Dendritic cell treated with granulocyte-macrophage colony-stimulating factor and Interleukin-4, amounts not matched to agents 40 ng/mL and 50 ng/mL, for 4 days (primary cell): ENCODE measurements at regions of chr12 and their contacts with region 1.

Region 1: DNA sequence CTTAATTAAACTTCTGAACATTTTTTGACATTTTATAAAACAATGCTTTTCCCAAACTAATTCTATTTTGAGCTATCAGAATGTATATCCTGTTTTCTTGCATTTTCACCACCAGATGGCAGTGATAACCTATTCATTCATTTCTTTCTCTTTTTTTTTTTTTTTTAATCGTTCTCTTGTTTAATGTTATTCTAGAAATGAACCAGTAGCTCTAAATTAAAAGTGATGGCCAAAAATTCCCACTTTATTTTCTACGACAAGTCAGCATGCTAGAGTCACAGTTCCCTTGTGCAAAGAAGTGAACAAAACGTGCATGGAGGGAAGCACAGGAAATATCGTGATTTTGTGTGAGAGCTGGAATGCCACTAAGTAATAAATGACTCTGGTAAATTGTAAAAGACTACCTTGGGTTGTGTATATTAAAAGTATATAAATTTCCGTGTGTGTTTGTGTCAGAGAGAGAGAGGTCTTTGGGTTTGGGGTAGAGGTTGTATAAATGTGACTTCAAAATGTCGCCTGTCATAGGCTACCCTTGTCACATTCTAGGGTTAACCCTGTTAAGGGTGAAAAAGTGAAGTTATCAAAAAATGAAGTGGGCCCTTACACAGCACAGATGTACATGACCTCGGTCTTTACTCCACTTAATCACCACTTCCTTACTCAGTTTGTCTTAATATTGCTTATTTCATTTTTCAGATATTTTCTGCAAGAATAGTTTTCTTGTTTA is 40.4 kb upstream of the LDHB start:
- H3K4me3 Mint-ChIP-seq: no peak overlapping the region
- H3K27ac Mint-ChIP-seq: no peak overlapping the region
- H3K4me1 Mint-ChIP-seq: peaks cover 6% of the 10 kb centered on the region
- H3K27me3 Mint-ChIP-seq: no peaks in the 10 kb centered on the region

Region 2: DNA sequence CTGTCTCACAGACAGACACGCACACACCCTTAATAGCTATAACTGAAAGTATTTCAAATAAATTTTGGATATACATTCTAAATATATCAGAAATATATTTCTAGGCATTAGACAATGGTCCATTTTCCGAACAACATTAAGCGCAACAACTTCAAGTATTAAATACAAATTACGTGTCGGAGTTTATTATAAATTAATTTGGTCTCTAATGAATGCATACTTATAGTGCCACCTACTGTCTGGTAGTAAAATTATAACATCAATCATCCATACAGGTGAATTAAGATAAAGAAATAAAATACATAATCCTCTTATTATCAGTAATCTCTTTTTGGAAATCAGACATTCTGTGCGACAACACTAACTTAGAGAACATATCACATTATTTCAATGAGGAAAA is 320.8 kb after region 1 on chr12:
- intact Hi-C with region 1: loop called (anchors 2 kb)
- H3K4me3 Mint-ChIP-seq: no peak overlapping the region
- H3K27ac Mint-ChIP-seq: no peak overlapping the region
- H3K4me1 Mint-ChIP-seq: no peaks in the 10 kb centered on the region
- H3K27me3 Mint-ChIP-seq: no peaks in the 10 kb centered on the region

Region 3: GRCh38 chr12:22334410-22335290 is 636.6 kb after region 1 on chr12 and contains the start of gene ST8SIA1:
- intact Hi-C with region 1: loop called (anchors 5 kb)
- H3K4me3 Mint-ChIP-seq: peak within 1 kb of the TSS; percentile 86
- H3K27ac Mint-ChIP-seq: peak within 1 kb of the TSS; percentile 63
- H3K4me1 Mint-ChIP-seq: peaks cover 46% of the 10 kb centered on the region
- H3K27me3 Mint-ChIP-seq: peaks cover 57% of the 10 kb centered on the region

Region 4: DNA sequence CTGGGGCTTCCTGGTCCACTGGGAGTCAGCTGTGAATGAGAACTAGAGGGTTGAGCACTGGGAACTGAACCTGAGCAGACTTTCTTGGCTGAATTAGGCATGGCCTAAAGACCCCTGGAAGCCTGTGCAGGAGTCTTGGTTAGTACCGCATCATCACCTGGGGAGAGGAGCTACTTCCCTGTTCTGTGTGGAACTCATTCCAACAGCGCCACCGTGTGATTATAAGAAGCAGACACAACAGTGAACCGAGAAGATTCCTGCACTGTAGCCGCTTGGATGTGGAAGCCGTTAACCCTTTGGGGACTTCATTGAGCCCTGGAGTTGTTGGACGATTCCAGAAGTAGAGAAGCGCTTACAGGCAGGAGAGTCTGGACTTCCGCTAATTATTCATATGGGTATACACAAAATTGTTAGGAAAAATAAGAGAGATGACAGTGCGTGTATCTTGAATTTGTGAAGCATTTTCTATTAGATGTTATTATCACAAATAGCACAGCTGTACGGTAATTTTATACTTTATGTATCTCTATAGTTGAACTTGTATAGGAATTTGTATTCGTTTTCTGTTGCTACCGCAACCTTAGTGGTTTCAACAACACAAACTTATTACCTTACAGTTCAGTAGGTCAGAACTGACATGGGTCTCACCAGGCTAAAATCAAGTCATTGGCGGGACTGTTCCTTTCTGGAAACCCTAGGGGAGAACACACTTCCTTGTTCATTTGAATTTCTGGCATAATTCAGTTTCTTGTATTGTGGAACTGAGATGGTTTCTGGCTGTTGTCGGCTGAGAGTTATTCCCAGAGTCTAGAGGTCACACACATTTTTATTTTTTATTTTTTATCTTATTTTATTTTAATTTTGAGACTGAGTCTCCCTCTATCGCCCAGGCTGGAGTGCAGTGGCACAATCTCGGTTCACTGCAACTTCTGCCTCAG is 745.6 kb after region 1 on chr12:
- intact Hi-C with region 1: loop called (anchors 2 kb)
- H3K4me3 Mint-ChIP-seq: no peak overlapping the region
- H3K27ac Mint-ChIP-seq: no peak overlapping the region
- H3K4me1 Mint-ChIP-seq: peaks cover 11% of the 10 kb centered on the region
- H3K27me3 Mint-ChIP-seq: peaks cover 2% of the 10 kb centered on the region

Region 5: GRCh38 chr12:22459838-22460490 is 761.9 kb after region 1 on chr12:
- intact Hi-C with region 1: loop called (anchors 5 kb)
- H3K4me3 Mint-ChIP-seq: no peak overlapping the region
- H3K27ac Mint-ChIP-seq: no peak overlapping the region
- H3K4me1 Mint-ChIP-seq: no peaks in the 10 kb centered on the region
- H3K27me3 Mint-ChIP-seq: no peaks in the 10 kb centered on the region